ENCODE measurements at regions of chr13 and their contacts with region 1.

Region 1: DNA sequence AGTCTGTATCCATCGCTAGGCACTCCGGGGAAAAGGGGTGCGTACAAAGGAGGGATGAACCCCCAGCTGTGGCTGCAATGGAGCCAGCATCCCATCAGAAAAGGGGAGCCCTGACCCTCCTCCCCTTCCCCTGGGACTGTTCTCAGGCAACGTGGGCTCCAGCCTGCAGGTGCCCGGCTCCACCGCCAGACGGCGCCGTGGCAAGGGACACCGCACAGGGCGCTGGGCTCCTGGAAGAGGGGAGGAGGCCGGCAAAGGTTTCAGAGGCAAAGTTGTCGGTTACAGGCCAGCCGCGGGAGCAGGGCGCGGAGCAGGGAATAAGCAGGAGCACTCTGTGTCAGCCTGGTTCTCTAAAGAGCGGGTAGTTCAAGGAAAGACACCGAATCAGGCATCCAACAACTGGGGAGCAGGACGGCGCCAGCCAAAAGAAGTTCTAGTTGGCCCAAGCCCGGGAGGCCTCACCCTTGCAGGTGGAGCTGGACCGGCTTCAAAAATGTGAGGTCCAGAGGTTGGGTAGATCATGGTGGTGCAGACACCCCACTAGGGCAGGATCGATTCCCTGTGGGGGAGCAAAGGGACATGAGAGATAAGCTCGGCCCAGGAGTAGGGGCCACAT is 53.0 kb upstream of the ATP12A start:
- DNase-seq: no peak
- H3K4me3 ChIP-seq: no peak overlapping the region
- CTCF ChIP-seq: peak; percentile 88

Region 2: DNA sequence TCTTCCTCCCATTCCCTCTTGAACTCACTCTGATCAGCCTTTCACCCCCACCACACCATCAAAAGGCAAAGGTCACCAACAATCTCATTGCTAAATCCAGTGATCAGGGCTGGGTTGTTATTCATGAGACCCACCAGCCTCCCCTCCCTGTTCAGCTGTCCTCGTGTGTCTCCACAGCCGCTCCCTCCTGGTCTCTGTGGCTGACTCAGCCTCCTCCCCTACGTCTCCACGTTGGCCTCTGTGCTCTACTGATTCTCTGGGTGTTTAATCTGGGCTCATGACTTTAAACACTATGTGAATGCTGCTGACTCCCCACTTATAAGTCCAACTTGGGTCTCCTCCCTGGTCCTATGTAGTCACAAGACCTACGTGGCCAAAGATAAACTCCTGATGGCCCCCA is 153.5 kb before region 1 on chr13:
- CTCF ChIA-PET with region 1: no interaction called
- POLR2A ChIA-PET with region 1: no interaction called
- DNase-seq: no peak
- H3K4me3 ChIP-seq: no peak overlapping the region
- CTCF ChIP-seq: no peak

Region 3: GRCh38 chr13:24564881-24565280 is 62.3 kb before region 1 on chr13:
- CTCF ChIA-PET with region 1: no interaction called
- POLR2A ChIA-PET with region 1: no interaction called
- DNase-seq: no peak
- H3K4me3 ChIP-seq: no peak overlapping the region
- CTCF ChIP-seq: no peak

Region 4: DNA sequence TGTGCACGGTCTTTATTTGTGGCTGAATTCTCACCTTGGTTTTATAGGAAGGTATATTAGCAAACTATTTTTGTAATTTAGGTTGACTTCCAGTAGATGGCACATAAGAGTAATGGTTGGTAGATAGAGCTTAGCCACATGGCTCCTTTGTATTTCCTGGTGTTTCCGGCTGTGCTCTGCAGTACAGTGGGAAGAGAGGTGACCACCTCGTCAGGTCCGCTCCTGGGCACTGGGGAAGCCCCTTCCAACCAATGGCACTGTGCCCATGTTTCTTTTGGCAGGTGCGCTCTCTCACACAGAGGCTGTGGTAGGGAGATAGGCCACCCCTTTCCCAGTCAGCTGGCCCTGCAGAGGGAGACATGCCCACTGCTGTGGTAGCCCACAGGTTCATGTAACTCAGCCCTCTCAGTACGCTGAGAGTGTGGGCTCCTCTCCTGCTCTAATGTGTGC is 21.3 kb before region 1 on chr13:
- CTCF ChIA-PET with region 1: interaction called, 12 read pairs
- POLR2A ChIA-PET with region 1: no interaction called
- DNase-seq: no peak
- H3K4me3 ChIP-seq: no peak overlapping the region
- CTCF ChIP-seq: peak; percentile 27

Measured in AG04449 (cell line).